Panc1 (cell line): ENCODE measurements at regions of chr7 and their contacts with region 1.

Region 1: DNA sequence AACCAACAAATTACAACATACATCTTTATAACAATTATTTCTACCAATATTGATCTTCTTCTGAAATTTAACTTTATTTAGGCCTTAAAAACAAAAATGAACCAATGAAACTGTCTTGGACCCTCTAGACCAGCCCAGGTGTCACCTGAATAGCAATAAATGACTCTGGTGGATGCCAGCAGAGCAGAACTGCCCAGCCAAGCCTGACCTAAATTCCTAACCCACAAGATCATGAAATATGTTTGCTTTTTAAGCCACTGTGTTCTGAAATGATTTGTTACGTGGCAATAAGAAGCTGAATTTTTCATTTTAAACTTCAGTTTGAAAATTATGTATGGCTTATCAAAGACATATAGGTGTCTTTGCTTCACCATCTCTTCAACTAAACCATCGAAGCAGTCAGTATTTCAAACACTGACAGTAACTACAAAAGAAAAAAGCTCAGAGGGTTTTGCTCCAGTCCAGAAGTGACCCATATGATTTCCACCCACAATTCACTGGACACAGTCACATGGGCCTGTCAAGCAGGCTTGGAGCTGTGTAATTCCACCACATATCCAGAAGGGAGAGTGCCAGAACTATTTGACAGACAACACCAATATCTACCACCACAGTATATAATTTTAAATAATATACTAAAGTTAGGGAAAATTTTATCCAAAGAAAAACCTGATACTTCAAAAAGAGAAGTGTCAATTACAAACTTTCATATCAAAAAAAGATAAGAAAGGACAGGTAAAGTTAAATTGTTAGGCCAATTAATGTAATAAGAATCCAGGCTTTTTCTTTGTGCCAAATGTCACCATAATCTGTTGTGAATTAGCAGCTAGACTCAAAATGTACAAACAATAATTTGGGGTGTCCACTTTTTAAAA is 94.5 kb downstream of the KMT2C start:
- DNase-seq: peak; percentile 32
- ATAC-seq: peak; percentile 94
- H3K4me3 ChIP-seq: no peak overlapping the region
- H3K27ac ChIP-seq: no peak overlapping the region
- H3K4me1 ChIP-seq: peaks cover 5% of the 10 kb centered on the region; the same call in 1 of the 2 replicates
- H3K27me3 ChIP-seq: no peaks in the 10 kb centered on the region
- CTCF ChIP-seq: peak; percentile 84

Region 2: GRCh38 chr7:152436111-152436930 is 95.0 kb after region 1 on chr7:
- CTCF ChIA-PET with region 1: no interaction called
- POLR2A ChIA-PET with region 1: no interaction called
- in situ Hi-C with region 1: no loop called
- intact Hi-C with region 1: loop called (anchors 10 kb)
- DNase-seq: peak; percentile 38
- ATAC-seq: peak; percentile 89
- H3K4me3 ChIP-seq: peak overlapping the region; percentile 53 to 65
- H3K27ac ChIP-seq: peak overlapping the region; percentile 90
- H3K4me1 ChIP-seq: peaks cover 8% of the 10 kb centered on the region
- H3K27me3 ChIP-seq: no peaks in the 10 kb centered on the region
- CTCF ChIP-seq: no peak

Region 3: DNA sequence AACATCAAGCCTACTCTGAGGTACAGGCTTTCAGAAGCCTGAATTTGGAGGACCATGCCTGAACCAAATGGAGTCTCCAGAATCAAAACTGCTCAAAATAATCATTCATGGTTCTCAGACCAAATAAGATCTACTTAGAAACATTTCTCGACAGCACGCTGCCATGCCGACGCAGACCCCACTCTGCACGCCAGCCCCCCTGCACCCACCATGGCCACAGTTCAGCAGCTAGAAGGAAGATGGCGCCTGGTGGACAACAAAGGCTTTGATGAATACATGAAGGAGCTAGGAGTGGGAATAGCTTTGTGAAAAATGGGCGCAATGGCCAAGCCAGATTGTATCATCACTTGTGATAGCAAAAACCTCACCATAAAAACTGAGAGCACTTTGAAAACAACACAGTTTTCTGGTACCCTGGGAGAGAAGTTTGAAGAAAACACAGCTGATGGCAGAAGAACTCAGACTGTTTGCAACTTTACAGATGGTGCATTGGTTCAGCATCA is 101.1 kb after region 1 on chr7:
- CTCF ChIA-PET with region 1: no interaction called
- POLR2A ChIA-PET with region 1: interaction called, 10 read pairs
- in situ Hi-C with region 1: no loop called
- intact Hi-C with region 1: loop called (anchors 10 kb)
- DNase-seq: no peak
- ATAC-seq: no peak
- H3K4me3 ChIP-seq: no peak overlapping the region
- H3K27ac ChIP-seq: no peak overlapping the region
- H3K4me1 ChIP-seq: peaks cover 4% of the 10 kb centered on the region
- H3K27me3 ChIP-seq: no peaks in the 10 kb centered on the region
- CTCF ChIP-seq: no peak

Region 4: GRCh38 chr7:152709287-152710152 is 368.2 kb after region 1 on chr7:
- CTCF ChIA-PET with region 1: interaction called, 5 read pairs
- POLR2A ChIA-PET with region 1: no interaction called
- in situ Hi-C with region 1: no loop called
- intact Hi-C with region 1: loop called (anchors 5 kb)
- DNase-seq: peak; percentile 82
- ATAC-seq: no peak
- H3K4me3 ChIP-seq: no peak overlapping the region
- H3K27ac ChIP-seq: no peak overlapping the region
- H3K4me1 ChIP-seq: no peaks in the 10 kb centered on the region
- H3K27me3 ChIP-seq: no peaks in the 10 kb centered on the region
- CTCF ChIP-seq: no peak